Heart left ventricle (tissue), 16 donors: ENCODE measurements at regions of chr17 and their contacts with region 1.

Region 1: DNA sequence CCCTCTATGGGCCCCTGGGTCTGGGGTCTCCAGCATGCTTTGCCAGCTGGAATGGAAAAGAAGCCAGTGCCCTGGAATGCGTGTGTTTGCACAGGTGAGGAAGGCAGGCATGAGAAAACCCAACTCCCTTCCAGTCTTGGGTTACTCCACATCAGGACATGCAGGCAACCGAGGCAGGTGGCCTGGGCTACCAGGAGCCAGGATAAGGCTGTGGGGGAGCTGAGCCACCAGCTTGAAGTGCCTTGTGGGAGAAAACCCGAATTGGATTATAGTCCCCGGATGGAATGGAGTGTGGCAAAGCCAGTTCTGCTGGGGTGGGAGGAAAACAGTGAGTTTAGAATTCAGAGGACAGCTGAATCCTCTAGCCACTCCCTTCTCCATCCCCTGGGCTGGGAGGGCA is 7.2 kb downstream of the SRCIN1 start:
- DNase-seq: no peak
- ATAC-seq: peak in 1 of 4 donors; percentile 27
- H3K4me3 ChIP-seq: no peak overlapping the region
- H3K27ac ChIP-seq: no peak overlapping the region
- H3K4me1 ChIP-seq: peaks cover 0 to 10% (median 2%) of the 10 kb centered on the region in 12 donors
- H3K27me3 ChIP-seq: peaks cover 7 to 93% (median 30%) of the 10 kb centered on the region in 9 donors
- CTCF ChIP-seq: no peak
- POLR2A ChIP-seq: no peak

Region 2: DNA sequence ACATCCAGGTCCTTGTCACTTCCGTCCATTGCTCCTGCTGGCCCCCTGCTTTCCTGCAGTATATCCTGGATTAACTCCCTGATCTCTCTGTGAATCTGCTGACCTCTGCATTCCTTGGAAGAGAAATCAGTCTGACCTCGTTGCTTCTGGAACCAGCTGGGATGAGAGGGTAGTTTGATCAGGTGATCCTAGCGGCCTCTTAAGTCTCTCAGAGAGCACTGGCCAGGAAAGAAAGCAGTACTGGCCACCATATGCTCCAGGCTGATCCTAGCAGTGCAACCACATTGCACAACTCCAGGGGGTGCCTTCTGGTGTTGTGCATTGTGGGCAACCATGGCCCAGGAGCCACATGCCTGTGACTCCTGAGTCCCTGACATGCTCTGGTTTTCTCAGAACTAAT is 91.1 kb before region 1 on chr17:
- intact Hi-C with region 1: no loop called
- DNase-seq: no peak
- ATAC-seq: no peak
- H3K4me3 ChIP-seq: no peak overlapping the region
- H3K27ac ChIP-seq: no peak overlapping the region
- H3K4me1 ChIP-seq: peaks cover 0 to 30% (median 7%) of the 10 kb centered on the region in 12 donors
- H3K27me3 ChIP-seq: peaks cover 0 to 29% (median 0%) of the 10 kb centered on the region in 9 donors
- CTCF ChIP-seq: no peak
- POLR2A ChIP-seq: no peak

Region 3: GRCh38 chr17:38544839-38545209 is 53.7 kb before region 1 on chr17:
- intact Hi-C with region 1: loop called in 1 of 10 experiments (anchors 10 kb)
- DNase-seq: no peak
- ATAC-seq: no peak
- H3K4me3 ChIP-seq: no peak overlapping the region
- H3K27ac ChIP-seq: no peak overlapping the region
- H3K4me1 ChIP-seq: peaks cover 0 to 5% (median 0%) of the 10 kb centered on the region in 12 donors
- H3K27me3 ChIP-seq: peaks cover 0 to 31% (median 0%) of the 10 kb centered on the region in 9 donors
- CTCF ChIP-seq: no peak
- POLR2A ChIP-seq: no peak

Region 4: GRCh38 chr17:38579934-38580333 is 18.6 kb before region 1 on chr17:
- intact Hi-C with region 1: no loop called
- DNase-seq: peak in 2 of 5 donors; percentile 46 to 47
- ATAC-seq: peak in 2 of 4 donors; percentile 44 to 47
- H3K4me3 ChIP-seq: no peak overlapping the region
- H3K27ac ChIP-seq: no peak overlapping the region
- H3K4me1 ChIP-seq: peaks cover 0 to 21% (median 10%) of the 10 kb centered on the region in 12 donors
- H3K27me3 ChIP-seq: peaks cover 22 to 85% (median 46%) of the 10 kb centered on the region in 9 donors
- CTCF ChIP-seq: peak in 2 of 12 donors; percentile 9 to 29
- POLR2A ChIP-seq: no peak